Breast epithelium (tissue), 4 donors: ENCODE measurements at regions of chr2 and their contacts with region 1.

Region 1: GRCh38 chr2:230244211-230244610 is 18.7 kb downstream of the SP140 start:
- DNase-seq: no peak
- H3K4me3 ChIP-seq: no peak overlapping the region
- H3K27ac ChIP-seq: no peak overlapping the region
- H3K4me1 ChIP-seq: no peaks in the 10 kb centered on the region
- H3K27me3 ChIP-seq: no peaks in the 10 kb centered on the region
- CTCF ChIP-seq: no peak
- POLR2A ChIP-seq: no peak

Region 2: GRCh38 chr2:230219419-230220331 is 24.5 kb before region 1 on chr2 and contains the start of gene SP110:
- intact Hi-C with region 1: loop called (anchors 1 kb)
- DNase-seq: peak; percentile 88 to 94
- H3K4me3 ChIP-seq: peak within 1 kb of the TSS; percentile 48 to 68 (median 68)
- H3K27ac ChIP-seq: peak within 1 kb of the TSS; percentile 77 to 90
- H3K4me1 ChIP-seq: no peaks in the 10 kb centered on the region
- H3K27me3 ChIP-seq: no peaks in the 10 kb centered on the region
- CTCF ChIP-seq: peak in 1 of 3 donors; percentile 18
- POLR2A ChIP-seq: no peak
- total RNA-seq, gene SP110: 18.2 to 39.0 (median 36.9) TPM

Region 3: GRCh38 chr2:230286048-230286447 is 41.8 kb after region 1 on chr2:
- intact Hi-C with region 1: no loop called
- DNase-seq: no peak
- H3K4me3 ChIP-seq: no peak overlapping the region
- H3K27ac ChIP-seq: no peak overlapping the region
- H3K4me1 ChIP-seq: no peaks in the 10 kb centered on the region
- H3K27me3 ChIP-seq: no peaks in the 10 kb centered on the region
- CTCF ChIP-seq: no peak
- POLR2A ChIP-seq: no peak

Region 4: GRCh38 chr2:230520875-230521155 is 276.6 kb after region 1 on chr2:
- intact Hi-C with region 1: no loop called
- DNase-seq: no peak
- H3K4me3 ChIP-seq: no peak overlapping the region
- H3K27ac ChIP-seq: no peak overlapping the region
- H3K4me1 ChIP-seq: no peaks in the 10 kb centered on the region
- H3K27me3 ChIP-seq: no peaks in the 10 kb centered on the region
- CTCF ChIP-seq: no peak
- POLR2A ChIP-seq: no peak